SK-N-SH (cell line): ENCODE measurements at regions of chr7 and their contacts with region 1.

Region 1: DNA sequence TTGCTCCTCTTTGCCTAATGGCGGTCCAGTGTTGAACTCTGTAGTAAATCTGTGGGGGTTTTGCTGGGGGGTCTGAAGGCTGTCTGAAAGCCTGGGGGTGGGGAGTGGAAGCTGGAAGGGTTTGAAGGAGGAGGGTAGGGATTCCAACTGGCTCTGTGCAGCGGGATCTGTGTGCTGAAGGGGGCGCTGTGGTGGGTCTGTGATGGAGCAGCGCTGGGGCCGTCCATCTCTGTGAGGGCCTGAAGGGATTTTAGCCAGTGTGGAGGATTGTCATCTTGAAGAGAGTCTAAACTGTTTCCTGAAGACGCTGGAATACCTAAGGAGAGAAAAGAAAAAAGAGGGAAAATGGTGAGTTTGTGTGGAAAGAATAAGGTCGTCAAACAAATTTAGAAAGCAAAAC is 129.2 kb downstream of the STRA8 start:
- DNase-seq: no peak
- H3K4me3 ChIP-seq: no peak overlapping the region
- H3K27ac ChIP-seq: no peak overlapping the region
- H3K4me1 ChIP-seq: peaks cover 0 to 5% of the 10 kb centered on the region in 2 experiments; a peak in 1 of 4 replicates
- H3K27me3 ChIP-seq: no peaks in the 10 kb centered on the region
- CTCF ChIP-seq: peak; percentile 33
- EP300 ChIP-seq: no peak
- RAD21 ChIP-seq: no peak

Region 2: GRCh38 chr7:135313971-135314370 is 48.9 kb before region 1 on chr7:
- CTCF ChIA-PET with region 1: no interaction called
- POLR2A ChIA-PET with region 1: no interaction called
- DNase-seq: no peak
- H3K4me3 ChIP-seq: no peak overlapping the region
- H3K27ac ChIP-seq: no peak overlapping the region
- H3K4me1 ChIP-seq: peaks cover 0 to 2% of the 10 kb centered on the region in 2 experiments; a peak in 1 of 4 replicates
- H3K27me3 ChIP-seq: no peaks in the 10 kb centered on the region; the same call in 1 of the 2 replicates
- CTCF ChIP-seq: no peak
- EP300 ChIP-seq: no peak
- RAD21 ChIP-seq: no peak

Region 3: DNA sequence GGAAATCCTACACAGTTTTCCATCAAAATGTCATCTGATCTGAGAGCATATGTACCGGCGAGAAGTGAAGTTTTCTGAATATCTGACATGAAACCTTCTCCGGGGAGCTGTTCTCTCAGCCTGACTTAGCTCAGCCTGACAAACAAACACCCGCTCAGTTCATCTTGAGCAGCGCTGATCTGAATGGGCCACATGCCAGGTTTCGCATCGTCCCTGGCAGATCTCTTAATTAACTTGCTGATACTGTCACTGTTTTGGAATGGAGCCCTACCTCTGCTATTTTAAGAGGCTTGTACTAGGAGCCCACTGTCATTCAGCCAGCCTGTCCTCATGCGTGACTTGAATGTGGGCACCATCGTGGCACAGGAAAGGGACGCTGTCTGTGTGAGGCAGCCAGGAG is 20.0 kb before region 1 on chr7:
- CTCF ChIA-PET with region 1: interaction called, 16 read pairs
- POLR2A ChIA-PET with region 1: no interaction called
- DNase-seq: peak; percentile 71
- H3K4me3 ChIP-seq: 0 out of 4 replicates have a peak overlapping the region, but pooled peaks have one; percentile 4 to 20
- H3K27ac ChIP-seq: no peak overlapping the region
- H3K4me1 ChIP-seq: peaks cover 0 to 16% of the 10 kb centered on the region in 2 experiments; a peak in 2 of 4 replicates
- H3K27me3 ChIP-seq: no peaks in the 10 kb centered on the region; the same call in 1 of the 2 replicates
- CTCF ChIP-seq: no peak
- EP300 ChIP-seq: no peak; a peak in 1 of 4 replicates
- RAD21 ChIP-seq: no peak

Region 4: GRCh38 chr7:135392701-135393100 is 29.8 kb after region 1 on chr7:
- CTCF ChIA-PET with region 1: no interaction called
- POLR2A ChIA-PET with region 1: no interaction called
- DNase-seq: no peak
- H3K4me3 ChIP-seq: no peak overlapping the region
- H3K27ac ChIP-seq: no peak overlapping the region
- H3K4me1 ChIP-seq: peaks cover 0 to 24% of the 10 kb centered on the region in 2 experiments; a peak in 3 of 4 replicates
- H3K27me3 ChIP-seq: no peaks in the 10 kb centered on the region
- CTCF ChIP-seq: no peak
- EP300 ChIP-seq: no peak
- RAD21 ChIP-seq: no peak

Region 5: GRCh38 chr7:135411098-135411497 is 48.2 kb after region 1 on chr7:
- CTCF ChIA-PET with region 1: no interaction called
- POLR2A ChIA-PET with region 1: no interaction called
- DNase-seq: no peak
- H3K4me3 ChIP-seq: no peak overlapping the region; a peak in 1 of 4 replicates
- H3K27ac ChIP-seq: no peak overlapping the region
- H3K4me1 ChIP-seq: no peaks in the 10 kb centered on the region
- H3K27me3 ChIP-seq: no peaks in the 10 kb centered on the region
- CTCF ChIP-seq: no peak
- EP300 ChIP-seq: no peak
- RAD21 ChIP-seq: no peak

Region 6: GRCh38 chr7:135831455-135832195 is 468.8 kb after region 1 on chr7:
- CTCF ChIA-PET with region 1: no interaction called
- POLR2A ChIA-PET with region 1: no interaction called
- DNase-seq: no peak
- H3K4me3 ChIP-seq: no peak overlapping the region
- H3K27ac ChIP-seq: no peak overlapping the region
- H3K4me1 ChIP-seq: no peaks in the 10 kb centered on the region; a peak in 1 of 4 replicates
- H3K27me3 ChIP-seq: peaks cover 6% of the 10 kb centered on the region; the same call in 1 of the 2 replicates
- CTCF ChIP-seq: no peak
- EP300 ChIP-seq: no peak
- RAD21 ChIP-seq: no peak